Astrocyte of the spinal cord (primary cell): ENCODE measurements at regions of chr14 and their contacts with region 1.

Region 1: DNA sequence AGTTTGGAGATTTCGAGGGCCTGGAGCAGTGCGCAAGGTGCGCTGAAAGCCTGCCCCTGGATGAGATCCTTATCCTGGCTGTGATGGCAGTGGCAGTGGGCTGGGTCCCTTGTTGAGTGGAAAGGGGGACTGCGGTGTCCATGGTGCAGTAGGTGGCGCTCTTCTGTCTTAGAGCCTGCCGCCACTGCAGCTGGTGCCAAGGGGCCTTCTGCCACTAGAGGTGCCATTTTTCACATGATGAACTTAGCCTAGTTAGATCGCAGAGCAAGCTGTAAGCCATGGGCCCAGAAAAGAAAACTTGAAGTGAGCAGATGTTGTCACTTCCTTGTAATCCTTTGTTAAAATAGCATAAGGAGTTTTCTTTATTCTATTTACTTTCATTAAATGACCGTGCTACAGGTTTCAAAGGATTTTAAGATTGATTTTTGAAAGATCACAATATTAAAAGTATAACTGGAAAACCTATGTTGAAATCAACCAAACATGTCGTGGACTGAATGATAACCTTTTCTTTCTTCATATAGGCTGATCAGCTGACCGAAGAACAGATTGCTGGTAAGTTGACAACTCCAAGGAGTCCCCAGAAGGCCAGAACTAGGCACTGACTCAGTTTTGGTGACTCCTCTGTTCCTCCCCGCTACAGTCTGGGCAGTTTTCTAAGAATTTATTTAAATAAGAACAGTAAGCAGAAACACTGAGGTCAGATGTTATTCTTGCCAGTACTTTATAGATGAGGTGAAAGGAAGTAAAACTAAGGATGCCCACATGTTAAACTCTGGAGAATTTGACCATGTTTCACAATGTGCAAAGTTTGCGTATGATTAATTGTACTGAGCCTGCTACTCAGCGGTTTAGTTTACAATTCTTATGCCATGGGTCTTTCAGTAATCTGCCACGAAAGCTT is 3.0 kb downstream of the CALM1 start:
- DNase-seq: peak; percentile 91
- H3K4me3 ChIP-seq: peak overlapping the region; percentile 20
- CTCF ChIP-seq: peak; percentile 100

Region 2: GRCh38 chr14:90721619-90722305 is 322.0 kb after region 1 on chr14:
- in situ Hi-C with region 1: loop called (anchors 25 kb)
- DNase-seq: peak; percentile 45
- H3K4me3 ChIP-seq: no peak overlapping the region
- CTCF ChIP-seq: no peak